CD4-positive, alpha-beta memory T cell (primary cell): ENCODE measurements at regions of chr11 and their contacts with region 1.

Region 1: GRCh38 chr11:63945477-63946163 is 6.8 kb downstream of the NAA40 start:
- DNase-seq: peak; percentile 45 to 53 (median 49)
- H3K4me3 ChIP-seq: no peak overlapping the region
- H3K4me3 Mint-ChIP-seq: no peak overlapping the region
- H3K27ac ChIP-seq: no peak overlapping the region
- H3K27ac Mint-ChIP-seq: peak overlapping the region in 1 of 7 donors; percentile 30
- H3K4me1 ChIP-seq: peaks cover under 1% of the 10 kb centered on the region
- H3K4me1 Mint-ChIP-seq: peaks cover 4 to 14% (median 8%) of the 10 kb centered on the region in 4 donors
- H3K27me3 ChIP-seq: no peaks in the 10 kb centered on the region
- H3K27me3 Mint-ChIP-seq: no peaks in the 10 kb centered on the region

Region 2: GRCh38 chr11:63768237-63769043 is 177.2 kb before region 1 on chr11 and contains the start of gene ZFTA:
- CTCF ChIA-PET with region 1: interaction called, 10 read pairs
- POLR2A ChIA-PET with region 1: interaction called, 5 read pairs
- intact Hi-C with region 1: loop called (anchors 1 kb)
- DNase-seq: peak; percentile 43 to 57 (median 49)
- H3K4me3 ChIP-seq: peak within 1 kb of the TSS; percentile 83 to 94
- H3K4me3 Mint-ChIP-seq: peak within 1 kb of the TSS; percentile 87 to 100 (median 94)
- H3K27ac ChIP-seq: peak within 1 kb of the TSS; percentile 8
- H3K27ac Mint-ChIP-seq: peak within 1 kb of the TSS; percentile 69 to 94 (median 83)
- H3K4me1 ChIP-seq: peaks cover 13% of the 10 kb centered on the region
- H3K4me1 Mint-ChIP-seq: peaks cover 3 to 18% (median 7%) of the 10 kb centered on the region in 4 donors
- H3K27me3 ChIP-seq: peaks cover 6% of the 10 kb centered on the region
- H3K27me3 Mint-ChIP-seq: peaks cover 4 to 14% of the 10 kb centered on the region in 2 donors
- total RNA-seq, gene ZFTA: 1.4 to 1.7 TPM

Region 3: GRCh38 chr11:63906585-63906984 is 39.0 kb before region 1 on chr11:
- CTCF ChIA-PET with region 1: interaction called, 14 read pairs
- POLR2A ChIA-PET with region 1: interaction called, 3 read pairs
- intact Hi-C with region 1: loop called (anchors 5 kb)
- DNase-seq: peak; percentile 45 to 52 (median 49)
- H3K4me3 ChIP-seq: no peak overlapping the region
- H3K4me3 Mint-ChIP-seq: no peak overlapping the region
- H3K27ac ChIP-seq: no peak overlapping the region
- H3K27ac Mint-ChIP-seq: peak overlapping the region in 4 of 7 donors; percentile 7 to 67 (median 38)
- H3K4me1 ChIP-seq: no peaks in the 10 kb centered on the region
- H3K4me1 Mint-ChIP-seq: peaks cover 0 to 4% (median 3%) of the 10 kb centered on the region in 4 donors
- H3K27me3 ChIP-seq: no peaks in the 10 kb centered on the region
- H3K27me3 Mint-ChIP-seq: no peaks in the 10 kb centered on the region

Region 4: GRCh38 chr11:63933459-63933858 is 12.2 kb before region 1 on chr11:
- CTCF ChIA-PET with region 1: interaction called, 14 read pairs
- POLR2A ChIA-PET with region 1: interaction called, 3 read pairs
- intact Hi-C with region 1: no loop called
- DNase-seq: no peak
- H3K4me3 ChIP-seq: no peak overlapping the region
- H3K4me3 Mint-ChIP-seq: no peak overlapping the region
- H3K27ac ChIP-seq: no peak overlapping the region
- H3K27ac Mint-ChIP-seq: no peak overlapping the region
- H3K4me1 ChIP-seq: peaks cover 8% of the 10 kb centered on the region
- H3K4me1 Mint-ChIP-seq: peaks cover 3 to 10% (median 7%) of the 10 kb centered on the region in 4 donors
- H3K27me3 ChIP-seq: no peaks in the 10 kb centered on the region
- H3K27me3 Mint-ChIP-seq: no peaks in the 10 kb centered on the region

Region 5: GRCh38 chr11:64000026-64000739 is 54.6 kb after region 1 on chr11:
- CTCF ChIA-PET with region 1: no interaction called
- POLR2A ChIA-PET with region 1: no interaction called
- intact Hi-C with region 1: no loop called
- DNase-seq: peak; percentile 66 to 79 (median 76)
- H3K4me3 ChIP-seq: peak overlapping the region in 1 of 2 donors; percentile 28
- H3K4me3 Mint-ChIP-seq: peak overlapping the region in 6 of 8 donors; percentile 21 to 76 (median 50)
- H3K27ac ChIP-seq: no peak overlapping the region
- H3K27ac Mint-ChIP-seq: no peak overlapping the region
- H3K4me1 ChIP-seq: peaks cover 8% of the 10 kb centered on the region
- H3K4me1 Mint-ChIP-seq: peaks cover 0 to 5% (median 3%) of the 10 kb centered on the region in 4 donors
- H3K27me3 ChIP-seq: no peaks in the 10 kb centered on the region
- H3K27me3 Mint-ChIP-seq: no peaks in the 10 kb centered on the region

Region 6: GRCh38 chr11:64094463-64095260 is 149.0 kb after region 1 on chr11:
- CTCF ChIA-PET with region 1: no interaction called
- POLR2A ChIA-PET with region 1: no interaction called
- intact Hi-C with region 1: no loop called
- DNase-seq: no peak
- H3K4me3 ChIP-seq: no peak overlapping the region
- H3K4me3 Mint-ChIP-seq: no peak overlapping the region
- H3K27ac ChIP-seq: no peak overlapping the region
- H3K27ac Mint-ChIP-seq: peak overlapping the region in 1 of 7 donors; percentile 32
- H3K4me1 ChIP-seq: no peaks in the 10 kb centered on the region
- H3K4me1 Mint-ChIP-seq: no peaks in the 10 kb centered on the region
- H3K27me3 ChIP-seq: no peaks in the 10 kb centered on the region
- H3K27me3 Mint-ChIP-seq: peaks cover 0 to 4% of the 10 kb centered on the region in 2 donors